Adrenal gland (tissue), 19 donors: ENCODE measurements at regions of chr7 and their contacts with region 1.

Region 1: DNA sequence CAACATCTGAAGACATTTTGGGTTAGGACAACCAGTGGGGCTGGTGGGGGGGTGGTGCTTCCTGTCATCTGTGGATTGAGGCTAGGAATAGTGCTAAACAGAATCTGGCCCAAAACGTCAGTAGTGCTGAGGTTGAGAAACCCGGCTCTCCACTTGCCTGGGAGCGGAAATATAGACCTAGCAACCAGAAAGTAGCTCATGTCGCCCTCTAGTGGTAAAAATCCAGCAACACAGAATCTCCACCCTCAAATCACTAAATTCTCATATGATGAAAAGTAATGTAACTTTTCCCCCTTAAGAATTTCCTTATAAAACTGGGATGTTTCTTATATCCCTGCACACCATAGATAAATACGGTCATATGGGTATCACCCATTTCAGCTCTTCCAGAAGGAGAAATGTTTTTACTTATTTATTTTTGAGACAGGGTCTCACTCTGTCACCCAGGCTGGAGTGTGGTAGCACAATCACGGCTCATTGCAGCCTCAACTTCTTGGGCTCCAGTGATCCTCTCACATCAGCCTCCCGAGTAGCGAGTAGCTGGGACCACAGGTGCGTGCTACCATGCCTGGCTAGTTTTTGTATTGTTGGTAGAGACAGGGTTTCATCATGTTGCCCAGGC is 34.4 kb downstream of the ZC3HAV1 start:
- DNase-seq: peak; percentile 72 to 90 (median 79)
- H3K4me3 ChIP-seq: no peak overlapping the region
- H3K27ac ChIP-seq: peak overlapping the region in 2 of 5 donors; percentile 43 to 46
- H3K4me1 ChIP-seq: peaks cover 0 to 6% of the 10 kb centered on the region in 2 donors
- H3K27me3 ChIP-seq: no peaks in the 10 kb centered on the region
- CTCF ChIP-seq: peak; percentile 78 to 85 (median 82)
- POLR2A ChIP-seq: no peak

Region 2: GRCh38 chr7:138886501-138886917 is 188.6 kb before region 1 on chr7:
- intact Hi-C with region 1: loop called (anchors 10 kb)
- DNase-seq: peak in 5 of 7 donors; percentile 38 to 64 (median 53)
- H3K4me3 ChIP-seq: no peak overlapping the region
- H3K27ac ChIP-seq: no peak overlapping the region
- H3K4me1 ChIP-seq: peaks cover 4 to 33% of the 10 kb centered on the region in 2 donors
- H3K27me3 ChIP-seq: no peaks in the 10 kb centered on the region
- CTCF ChIP-seq: peak; percentile 51 to 89 (median 76)
- POLR2A ChIP-seq: peak in 1 of 2 donors; percentile 21

Region 3: DNA sequence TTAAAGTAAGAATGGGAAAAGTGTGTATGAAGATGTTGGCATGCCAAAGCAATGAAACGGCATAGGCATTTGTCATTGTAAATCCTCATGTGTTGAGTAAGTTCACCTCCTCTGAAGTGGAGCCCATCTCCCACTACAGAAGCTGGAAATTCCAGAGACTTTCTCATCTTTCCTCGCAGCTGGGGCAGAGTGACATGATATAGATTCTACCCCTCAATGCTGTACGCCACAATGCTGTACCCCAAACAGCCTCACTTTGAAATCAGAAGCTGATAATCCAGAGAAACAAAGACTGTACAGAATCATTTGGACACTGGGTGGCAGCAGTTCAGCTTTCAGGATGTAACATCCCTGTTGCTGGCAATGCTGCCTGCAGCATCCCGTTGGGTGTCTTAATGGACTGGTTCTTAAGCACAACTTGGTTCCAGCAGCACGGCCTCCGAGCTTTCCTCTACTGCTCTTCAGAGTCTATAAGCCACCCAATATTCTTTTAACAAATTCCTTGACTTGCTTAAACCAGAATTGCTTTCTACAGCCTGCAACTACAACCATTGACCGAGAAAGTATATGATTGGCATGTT is 58.1 kb before region 1 on chr7:
- intact Hi-C with region 1: loop called (anchors 5 kb)
- DNase-seq: peak; percentile 65 to 88 (median 79)
- H3K4me3 ChIP-seq: no peak overlapping the region
- H3K27ac ChIP-seq: no peak overlapping the region
- H3K4me1 ChIP-seq: peaks cover 0 to 12% of the 10 kb centered on the region in 2 donors
- H3K27me3 ChIP-seq: no peaks in the 10 kb centered on the region
- CTCF ChIP-seq: peak; percentile 54 to 81 (median 71)
- POLR2A ChIP-seq: no peak